ENCODE measurements at regions of chr1 and their contacts with region 1.

Region 1: DNA sequence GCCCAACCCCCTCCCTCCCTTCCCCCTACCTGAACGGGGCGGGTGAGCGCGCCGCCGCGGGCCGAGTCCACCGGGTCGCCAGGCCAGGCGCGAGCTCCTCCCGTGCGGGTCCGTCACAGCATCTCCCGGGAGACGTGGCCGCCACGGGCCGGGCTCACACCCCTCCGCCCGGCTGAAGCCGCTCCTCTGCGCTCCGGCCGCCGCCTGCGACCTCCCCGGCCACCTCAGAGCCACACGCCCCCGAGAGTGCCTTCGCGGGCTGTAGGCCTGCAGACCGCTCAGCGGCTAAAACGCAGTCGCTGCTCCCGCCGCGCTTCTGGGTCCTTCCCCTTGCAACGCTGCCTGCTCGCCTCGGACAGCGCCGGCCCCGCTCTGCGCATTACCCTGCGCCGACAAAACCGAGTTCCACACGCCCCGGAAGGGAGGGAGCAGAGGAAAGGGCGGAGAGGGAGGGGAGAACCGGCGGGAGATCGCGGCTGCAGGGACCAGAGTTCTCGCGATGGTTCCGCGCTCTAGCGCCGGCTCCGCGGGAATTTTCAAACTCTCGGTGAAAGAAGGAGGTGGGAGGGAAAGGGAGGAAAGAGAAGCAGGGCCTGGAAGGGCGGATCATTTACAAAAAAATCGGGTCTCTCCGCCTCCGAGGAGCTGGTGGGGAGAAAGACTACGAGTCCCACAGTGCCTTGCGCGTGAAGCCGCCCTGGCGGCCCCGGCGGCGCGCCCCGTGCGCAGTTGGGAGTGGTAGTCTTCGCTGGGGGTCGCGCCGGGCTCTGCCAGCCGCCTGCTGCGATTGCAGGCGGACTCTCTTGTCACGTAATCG is at the start of gene AHCTF1:
- DNase-seq: peak; percentile 88 to 97
- H3K4me3 ChIP-seq: peak within 1 kb of the TSS; percentile 67
- H3K27ac ChIP-seq: peak within 1 kb of the TSS; percentile 70
- H3K4me1 ChIP-seq: peaks cover 9% of the 10 kb centered on the region; the same call in 1 of the 2 replicates
- H3K27me3 ChIP-seq: no peaks in the 10 kb centered on the region
- CTCF ChIP-seq: no peak
- total RNA-seq, gene AHCTF1: 27.8 and 34.3 TPM in 2 replicates

Region 2: GRCh38 chr1:246865921-246866320 is 65.8 kb before region 1 on chr1:
- CTCF ChIA-PET with region 1: no interaction called
- POLR2A ChIA-PET with region 1: no interaction called
- intact Hi-C with region 1: no loop called
- DNase-seq: no peak
- H3K4me3 ChIP-seq: no peak overlapping the region
- H3K27ac ChIP-seq: no peak overlapping the region
- H3K4me1 ChIP-seq: no peaks in the 10 kb centered on the region
- H3K27me3 ChIP-seq: no peaks in the 10 kb centered on the region
- CTCF ChIP-seq: no peak

Region 3: GRCh38 chr1:246971090-246971721 is 39.4 kb after region 1 on chr1:
- CTCF ChIA-PET with region 1: no interaction called
- POLR2A ChIA-PET with region 1: no interaction called
- intact Hi-C with region 1: no loop called
- DNase-seq: peak in 1 of 2 experiments; percentile 2
- H3K4me3 ChIP-seq: no peak overlapping the region
- H3K27ac ChIP-seq: no peak overlapping the region
- H3K4me1 ChIP-seq: no peaks in the 10 kb centered on the region
- H3K27me3 ChIP-seq: no peaks in the 10 kb centered on the region
- CTCF ChIP-seq: peak; percentile 26; the same call in 1 of the 2 replicates

Region 4: DNA sequence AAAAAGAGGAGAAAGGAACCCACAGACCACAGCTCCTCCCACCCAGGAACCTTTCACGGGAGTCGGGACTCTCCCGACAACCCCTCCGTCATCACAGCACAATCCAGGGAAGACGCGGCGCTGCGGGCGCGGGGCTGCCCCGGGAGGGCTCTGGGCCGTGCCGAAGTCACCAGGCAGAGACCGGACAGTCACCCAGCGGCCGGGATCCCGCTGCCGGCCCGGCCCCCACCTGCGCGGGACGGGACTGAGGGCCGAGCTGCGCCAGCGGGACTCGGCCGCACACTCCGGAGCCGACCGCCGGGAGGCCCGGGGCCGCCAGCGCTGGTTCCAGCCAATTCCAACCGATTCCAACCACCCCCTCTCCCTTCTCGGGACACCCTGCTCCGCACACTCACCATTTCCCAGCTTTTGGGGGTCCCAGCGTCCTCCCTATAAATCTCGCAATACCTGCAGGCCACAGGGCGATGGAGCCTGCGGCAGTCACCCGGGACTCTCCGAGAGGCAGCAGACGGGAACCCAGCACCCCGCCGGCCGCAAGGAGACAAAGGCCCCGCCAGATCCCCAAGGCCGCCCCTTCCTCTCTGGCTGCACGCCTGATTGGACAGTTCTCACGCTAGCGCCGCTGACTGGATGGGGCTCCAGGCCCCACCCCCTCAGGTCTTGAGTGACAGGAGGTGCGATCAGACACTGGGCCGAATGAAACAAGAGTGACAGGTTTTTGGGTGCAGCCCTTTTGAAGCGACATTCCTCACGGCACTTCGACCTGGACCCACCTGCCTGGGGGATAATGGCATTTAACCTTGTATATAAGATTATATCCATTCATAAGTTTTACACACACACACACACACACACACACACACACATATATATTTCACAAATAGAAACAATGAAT is 76.0 kb after region 1 on chr1 and contains the start of gene ZNF695:
- CTCF ChIA-PET with region 1: no interaction called
- POLR2A ChIA-PET with region 1: interaction called, 4 read pairs
- intact Hi-C with region 1: loop called (anchors 2 kb)
- DNase-seq: peak; percentile 89 to 95
- H3K4me3 ChIP-seq: peak within 1 kb of the TSS; percentile 90
- H3K27ac ChIP-seq: no peak within 1 kb of the TSS
- H3K4me1 ChIP-seq: no peaks in the 10 kb centered on the region
- H3K27me3 ChIP-seq: no peaks in the 10 kb centered on the region
- CTCF ChIP-seq: no peak
- total RNA-seq, gene ZNF695: 9.5 and 9.8 TPM in 2 replicates

Region 5: DNA sequence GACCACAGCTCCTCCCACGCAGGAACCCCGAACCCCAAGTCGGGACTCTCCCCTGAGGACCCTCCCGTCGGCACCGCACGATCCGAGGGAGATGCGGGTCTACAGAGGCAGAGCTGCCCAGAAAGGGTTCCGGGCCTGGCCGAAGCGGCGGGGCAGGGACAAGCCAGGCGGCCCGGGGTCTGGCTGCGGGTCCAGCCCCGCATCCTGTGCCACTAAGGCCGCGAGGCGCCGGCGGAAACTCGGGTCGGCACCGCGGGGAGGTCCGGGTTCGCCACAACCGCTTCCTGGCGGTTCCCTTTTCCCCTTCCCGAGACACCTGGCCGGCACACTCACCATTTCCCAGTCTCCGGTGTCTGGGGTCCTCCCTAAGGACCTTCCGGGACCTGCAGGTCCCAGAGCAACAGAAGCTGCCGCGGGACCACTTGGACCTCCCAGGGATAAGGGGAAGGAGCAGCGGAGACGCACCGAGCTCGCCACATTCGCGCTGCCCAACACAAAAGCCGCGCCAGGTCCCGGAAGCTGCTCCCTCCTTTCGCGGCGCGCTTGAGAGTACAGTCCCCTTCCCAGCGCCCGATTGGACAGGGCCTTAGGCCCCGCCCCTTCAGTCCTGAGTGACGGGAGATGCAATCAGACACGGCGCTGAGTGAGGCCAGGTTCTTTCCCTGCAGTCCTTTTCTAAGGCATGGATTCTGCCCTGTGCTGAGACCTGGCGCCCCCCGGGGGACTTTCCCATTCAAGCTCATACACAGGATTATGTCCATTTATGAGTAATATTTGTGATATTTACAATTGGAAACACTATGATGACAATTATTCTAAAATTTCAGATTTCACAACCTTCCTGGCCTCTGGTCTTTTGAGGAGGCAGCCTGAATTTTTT is 146.7 kb after region 1 on chr1 and contains the start of gene ZNF670:
- CTCF ChIA-PET with region 1: no interaction called
- POLR2A ChIA-PET with region 1: no interaction called
- intact Hi-C with region 1: loop called (anchors 2 kb)
- DNase-seq: peak; percentile 84 to 92
- H3K4me3 ChIP-seq: peak within 1 kb of the TSS; percentile 95
- H3K27ac ChIP-seq: peak within 1 kb of the TSS; percentile 45
- H3K4me1 ChIP-seq: no peaks in the 10 kb centered on the region; the same call in 1 of the 2 replicates
- H3K27me3 ChIP-seq: no peaks in the 10 kb centered on the region
- CTCF ChIP-seq: no peak; the same call in 1 of the 2 replicates
- total RNA-seq, gene ZNF670: 2.4 and 2.5 TPM in 2 replicates

Region 6: GRCh38 chr1:247103859-247104591 is 172.3 kb after region 1 on chr1 and contains the start of gene ZNF669:
- CTCF ChIA-PET with region 1: no interaction called
- POLR2A ChIA-PET with region 1: no interaction called
- intact Hi-C with region 1: loop called (anchors 1 kb)
- DNase-seq: peak; percentile 80 to 95
- H3K4me3 ChIP-seq: peak within 1 kb of the TSS; percentile 76
- H3K27ac ChIP-seq: peak within 1 kb of the TSS; percentile 53
- H3K4me1 ChIP-seq: 0 out of 2 replicates have a peak, but pooled peaks cover 4% of the 10 kb centered on the region
- H3K27me3 ChIP-seq: peaks cover 8% of the 10 kb centered on the region; the same call in 1 of the 2 replicates
- CTCF ChIP-seq: no peak
- total RNA-seq, gene ZNF669: 5.3 and 7.0 TPM in 2 replicates

Region 7: GRCh38 chr1:247210376-247211117 is 278.8 kb after region 1 on chr1:
- CTCF ChIA-PET with region 1: no interaction called
- POLR2A ChIA-PET with region 1: no interaction called
- intact Hi-C with region 1: loop called (anchors 1 kb)
- DNase-seq: peak; percentile 84 to 96
- H3K4me3 ChIP-seq: peak overlapping the region; percentile 90
- H3K27ac ChIP-seq: 0 out of 2 replicates have a peak overlapping the region, but pooled peaks have one; percentile 34
- H3K4me1 ChIP-seq: peaks cover 9% of the 10 kb centered on the region; the same call in 1 of the 2 replicates
- H3K27me3 ChIP-seq: no peaks in the 10 kb centered on the region
- CTCF ChIP-seq: no peak

Region 8: DNA sequence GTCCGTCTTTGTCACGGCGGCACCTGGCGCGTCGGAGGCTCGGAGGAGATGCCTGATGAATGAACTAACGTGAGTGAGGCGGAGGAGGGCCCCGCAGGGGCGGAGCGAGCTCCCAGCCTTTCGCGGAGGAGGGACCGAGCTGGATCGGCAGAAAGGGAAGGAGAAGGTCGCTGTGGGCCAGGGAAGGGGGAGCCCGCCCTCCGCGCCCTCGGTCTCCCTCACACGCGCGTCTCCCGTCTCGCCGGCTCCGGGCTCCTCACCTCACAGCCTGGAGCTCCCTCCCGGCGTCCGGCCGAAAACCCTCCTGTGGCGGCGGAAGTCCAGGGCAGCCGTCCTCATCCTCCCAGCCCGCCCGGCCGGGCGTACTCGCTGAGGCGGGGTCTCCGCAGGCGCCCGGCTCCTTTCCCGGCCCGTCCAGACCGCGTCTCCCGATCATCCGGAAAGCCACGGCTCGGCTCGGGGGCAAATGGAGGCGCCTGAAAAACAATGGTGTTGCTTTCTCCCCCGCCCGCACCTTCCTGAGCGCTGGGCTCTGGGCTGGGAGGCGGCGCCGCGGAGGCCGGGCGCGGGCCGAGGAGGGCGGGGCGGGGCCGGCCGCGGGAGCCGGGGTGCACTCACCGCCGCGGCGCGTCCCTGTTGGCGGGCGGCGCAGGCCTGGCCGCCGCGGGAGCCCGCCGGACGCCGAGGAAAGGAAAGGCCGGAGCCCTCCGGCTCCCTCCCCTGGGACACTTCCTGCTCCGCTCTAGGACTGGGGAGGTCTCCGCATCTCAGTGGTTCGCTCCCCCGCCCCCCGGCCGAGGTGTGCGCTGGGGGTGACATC is 399.6 kb after region 1 on chr1 and contains the start of gene ZNF496:
- CTCF ChIA-PET with region 1: no interaction called
- POLR2A ChIA-PET with region 1: no interaction called
- intact Hi-C with region 1: loop called (anchors 2 kb)
- DNase-seq: peak; percentile 63 to 93
- H3K4me3 ChIP-seq: peak within 1 kb of the TSS; percentile 75
- H3K27ac ChIP-seq: peak within 1 kb of the TSS; percentile 44
- H3K4me1 ChIP-seq: 0 out of 2 replicates have a peak, but pooled peaks cover 4% of the 10 kb centered on the region
- H3K27me3 ChIP-seq: no peaks in the 10 kb centered on the region
- CTCF ChIP-seq: no peak
- total RNA-seq, gene ZNF496: 37.6 and 56.8 TPM in 2 replicates

Measured in PC-9 (cell line).